Aorta (tissue), 5 donors: ENCODE measurements at regions of chr16 and their contacts with region 1.

Region 1: GRCh38 chr16:24975428-24975889 is 39.7 kb downstream of the ARHGAP17 start:
- DNase-seq: no peak
- ATAC-seq: no peak
- H3K4me3 ChIP-seq: no peak overlapping the region
- H3K27ac ChIP-seq: peak overlapping the region in 1 of 2 donors; percentile 22
- H3K4me1 ChIP-seq: no peaks in the 10 kb centered on the region
- H3K27me3 ChIP-seq: no peaks in the 10 kb centered on the region

Region 2: GRCh38 chr16:24291932-24292331 is 683.5 kb before region 1 on chr16:
- intact Hi-C with region 1: no loop called
- DNase-seq: no peak
- ATAC-seq: no peak
- H3K4me3 ChIP-seq: no peak overlapping the region
- H3K27ac ChIP-seq: no peak overlapping the region
- H3K4me1 ChIP-seq: no peaks in the 10 kb centered on the region
- H3K27me3 ChIP-seq: no peaks in the 10 kb centered on the region

Region 3: DNA sequence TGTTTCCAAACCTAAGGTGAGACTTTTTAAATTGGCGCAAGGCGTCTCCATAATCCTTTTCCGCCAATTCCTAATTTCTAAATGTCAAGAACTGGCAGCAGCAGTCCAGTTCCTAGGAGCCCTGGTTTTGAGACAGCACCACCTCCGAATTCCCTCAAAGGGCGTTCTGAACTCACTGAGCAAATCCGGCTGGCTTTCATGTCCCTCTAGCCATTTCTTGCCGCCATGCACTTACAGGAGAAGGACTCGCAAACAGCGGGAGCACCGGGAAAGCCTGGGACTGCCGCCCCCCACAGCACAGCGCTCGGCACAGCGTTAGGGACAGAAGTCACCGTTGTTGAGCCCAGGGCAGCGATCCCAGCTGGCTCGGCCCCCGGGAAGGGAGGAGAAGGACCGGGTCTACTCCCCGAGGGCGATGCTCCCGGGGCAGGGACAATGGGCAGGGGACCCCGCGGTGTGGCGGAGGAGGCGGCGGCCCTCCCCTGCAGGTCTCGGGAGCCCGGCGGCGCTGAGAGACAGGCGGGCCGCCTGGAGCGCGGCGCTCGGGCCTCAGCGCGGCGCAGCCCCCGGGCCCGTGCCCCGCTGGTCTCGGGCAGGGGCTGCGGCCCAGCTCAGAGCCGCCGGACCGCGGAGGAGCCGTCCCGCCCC is 39.2 kb after region 1 on chr16:
- intact Hi-C with region 1: loop called (anchors 5 kb)
- DNase-seq: peak; percentile 61 to 85
- ATAC-seq: peak; percentile 51
- H3K4me3 ChIP-seq: peak overlapping the region; percentile 97 to 99
- H3K27ac ChIP-seq: peak overlapping the region; percentile 25 to 79
- H3K4me1 ChIP-seq: peaks cover 0 to 12% of the 10 kb centered on the region in 2 donors
- H3K27me3 ChIP-seq: no peaks in the 10 kb centered on the region